Activated T-helper 2 cell treated with anti-CD3 and anti-CD28 coated beads, Interferon-gamma antibody, Interleukin-2, Interleukin-4, amounts not matched to agents 10 μg/mL and 5 μg/mL and 100 μg/mL, durations not matched to agents 14 hours and 24 hours and 36 hours (primary cell): ENCODE measurements at regions of chr17 and their contacts with region 1.

Region 1: GRCh38 chr17:57892146-57892828 is 42.4 kb upstream of the MRPS23 start:
- DNase-seq: peak; percentile 66
- H3K4me3 Mint-ChIP-seq: no peak overlapping the region
- H3K27ac Mint-ChIP-seq: no peak overlapping the region
- H3K4me1 Mint-ChIP-seq: peaks cover 12% of the 10 kb centered on the region
- H3K27me3 Mint-ChIP-seq: peaks cover 4% of the 10 kb centered on the region

Region 2: DNA sequence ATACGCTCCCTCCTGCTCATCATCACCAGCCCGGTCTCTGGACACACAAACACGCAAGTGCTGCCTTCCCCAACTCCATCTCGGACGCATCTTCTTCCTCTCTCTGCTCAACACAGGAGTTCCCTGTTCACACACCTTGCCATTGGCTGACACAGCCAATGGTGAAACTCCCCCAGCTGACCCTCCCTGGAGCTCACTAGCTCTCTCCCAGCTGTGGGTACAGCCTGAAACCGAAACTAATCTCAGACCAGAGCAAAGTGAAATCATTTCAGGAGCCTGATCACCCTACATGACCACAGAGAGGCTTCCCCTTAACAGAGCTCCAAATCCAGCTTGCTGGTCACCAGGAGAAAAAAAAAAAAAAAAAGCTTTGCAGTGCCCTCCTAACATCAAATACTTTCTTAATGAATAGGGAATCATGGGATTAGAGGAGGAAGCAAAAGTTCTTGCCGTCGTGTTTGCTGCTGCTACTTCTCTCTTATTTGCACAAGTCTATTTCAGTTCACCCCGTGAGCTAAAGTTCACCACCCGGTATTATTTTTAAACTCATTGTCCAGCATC is 54.6 kb after region 1 on chr17:
- intact Hi-C with region 1: loop called (anchors 5 kb)
- DNase-seq: peak; percentile 39
- H3K4me3 Mint-ChIP-seq: peak overlapping the region; percentile 31
- H3K27ac Mint-ChIP-seq: no peak overlapping the region
- H3K4me1 Mint-ChIP-seq: peaks cover 30% of the 10 kb centered on the region
- H3K27me3 Mint-ChIP-seq: peaks cover 33% of the 10 kb centered on the region

Region 3: DNA sequence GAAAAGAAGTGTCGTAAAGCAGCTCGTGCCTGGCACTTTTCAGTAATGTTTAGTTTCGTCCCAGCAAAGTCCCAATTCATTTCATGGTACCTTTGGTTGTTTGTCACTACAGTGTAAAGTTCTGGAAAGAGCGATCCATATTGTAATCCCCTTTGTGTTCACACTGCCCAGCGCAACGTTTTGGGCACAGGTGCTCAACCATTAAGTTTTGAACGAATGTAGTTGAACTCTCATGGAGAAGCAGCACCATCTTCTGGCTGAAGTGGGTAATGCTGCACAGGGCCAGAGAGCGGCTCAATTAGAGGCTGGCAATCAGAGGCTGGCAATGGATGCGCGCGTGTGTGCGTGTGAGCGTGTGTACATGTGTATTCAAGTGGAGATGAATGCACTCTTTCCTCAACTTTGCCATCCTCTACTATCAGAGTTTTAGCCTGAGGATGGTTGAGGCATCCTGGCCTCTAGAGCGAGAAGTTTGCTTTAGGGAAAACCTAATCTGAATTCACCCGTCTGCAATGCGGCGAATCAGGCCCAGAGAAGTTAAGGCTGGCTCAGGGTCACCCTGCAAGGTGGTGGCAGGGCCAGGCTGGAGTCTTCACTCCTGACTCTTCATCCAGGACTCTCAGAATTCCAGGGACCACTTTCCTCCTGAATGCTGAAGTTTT is 220.8 kb after region 1 on chr17:
- intact Hi-C with region 1: loop called (anchors 1 kb)
- DNase-seq: peak; percentile 71
- H3K4me3 Mint-ChIP-seq: no peak overlapping the region
- H3K27ac Mint-ChIP-seq: no peak overlapping the region
- H3K4me1 Mint-ChIP-seq: no peaks in the 10 kb centered on the region
- H3K27me3 Mint-ChIP-seq: peaks cover 10% of the 10 kb centered on the region